Esophagus muscularis mucosa (tissue), 4 donors: ENCODE measurements at regions of chr4 and their contacts with region 1.

Region 1: GRCh38 chr4:139633661-139634060 is 32.0 kb upstream of the MGST2 start:
- DNase-seq: no peak
- H3K4me3 ChIP-seq: peak overlapping the region; percentile 32 to 36 (median 34)
- H3K27ac ChIP-seq: peak overlapping the region in 2 of 4 donors; percentile 14 to 36
- H3K4me1 ChIP-seq: no peaks in the 10 kb centered on the region
- H3K27me3 ChIP-seq: no peaks in the 10 kb centered on the region
- CTCF ChIP-seq: peak; percentile 35 to 59 (median 42)
- EP300 ChIP-seq: no peak
- POLR2A ChIP-seq: no peak

Region 2: GRCh38 chr4:139416073-139416673 is 217.5 kb before region 1 on chr4:
- intact Hi-C with region 1: loop called (anchors 5 kb)
- DNase-seq: no peak
- H3K4me3 ChIP-seq: no peak overlapping the region
- H3K27ac ChIP-seq: no peak overlapping the region
- H3K4me1 ChIP-seq: peaks cover 0 to 3% (median 0%) of the 10 kb centered on the region in 4 donors
- H3K27me3 ChIP-seq: no peaks in the 10 kb centered on the region
- CTCF ChIP-seq: peak; percentile 53 to 71 (median 61)
- EP300 ChIP-seq: no peak
- POLR2A ChIP-seq: no peak

Region 3: DNA sequence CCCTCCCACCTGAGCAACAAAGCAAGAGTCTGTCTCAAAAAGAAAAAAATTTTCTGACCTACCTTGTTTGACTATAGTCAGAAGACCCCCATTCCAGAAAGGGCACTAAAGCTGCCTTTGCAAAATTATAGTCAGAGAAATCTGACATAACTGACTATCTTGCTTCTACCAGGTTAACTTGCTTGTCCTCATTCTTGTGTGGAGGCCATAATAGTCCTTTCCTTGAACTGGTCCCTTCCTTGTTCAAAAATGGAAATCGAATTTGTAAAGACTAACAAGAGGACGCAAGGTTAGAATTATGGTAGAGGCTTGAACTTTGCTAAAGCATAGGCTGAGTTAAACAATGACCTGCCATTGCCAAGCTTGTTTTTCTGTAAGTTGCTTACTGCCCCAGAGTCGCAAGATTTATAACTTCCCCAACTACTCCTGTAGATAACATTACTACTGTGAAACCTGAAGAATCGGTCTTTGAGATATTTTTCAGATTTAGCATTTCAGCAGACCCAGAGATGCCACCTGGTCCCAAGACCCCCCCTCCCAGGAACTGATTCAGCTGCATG is 134.6 kb before region 1 on chr4:
- intact Hi-C with region 1: loop called (anchors 5 kb)
- DNase-seq: no peak
- H3K4me3 ChIP-seq: no peak overlapping the region
- H3K27ac ChIP-seq: no peak overlapping the region
- H3K4me1 ChIP-seq: peaks cover 0 to 12% (median 11%) of the 10 kb centered on the region in 4 donors
- H3K27me3 ChIP-seq: no peaks in the 10 kb centered on the region
- CTCF ChIP-seq: no peak
- EP300 ChIP-seq: no peak
- POLR2A ChIP-seq: no peak